ENCODE measurements at regions of chr4 and their contacts with region 1.

Region 1: GRCh38 chr4:119212234-119212963 is at the start of gene USP53:
- DNase-seq: peak; percentile 99
- ATAC-seq: peak; percentile 92
- H3K4me3 Mint-ChIP-seq: peak within 1 kb of the TSS; percentile 86
- H3K27ac Mint-ChIP-seq: peak within 1 kb of the TSS; percentile 91
- H3K4me1 Mint-ChIP-seq: peaks cover 39% of the 10 kb centered on the region
- H3K27me3 Mint-ChIP-seq: no peaks in the 10 kb centered on the region
- total RNA-seq, gene USP53: 11.4 to 14.0 TPM

Region 2: GRCh38 chr4:118278473-118279274 is 933.7 kb before region 1 on chr4:
- CTCF ChIA-PET with region 1: no interaction called
- POLR2A ChIA-PET with region 1: no interaction called
- intact Hi-C with region 1: loop called in 1 of 2 experiments (anchors 2 kb)
- DNase-seq: peak; percentile 99
- ATAC-seq: peak; percentile 96
- H3K4me3 Mint-ChIP-seq: peak overlapping the region; percentile 96
- H3K27ac Mint-ChIP-seq: peak overlapping the region; percentile 99
- H3K4me1 Mint-ChIP-seq: peaks cover 37% of the 10 kb centered on the region
- H3K27me3 Mint-ChIP-seq: no peaks in the 10 kb centered on the region

Region 3: GRCh38 chr4:118835571-118836300 is 376.7 kb before region 1 on chr4 and contains the start of gene SEC24D:
- CTCF ChIA-PET with region 1: no interaction called
- POLR2A ChIA-PET with region 1: no interaction called
- intact Hi-C with region 1: loop called in 1 of 2 experiments (anchors 5 kb)
- DNase-seq: peak; percentile 91
- ATAC-seq: peak; percentile 88
- H3K4me3 Mint-ChIP-seq: peak within 1 kb of the TSS; percentile 86
- H3K27ac Mint-ChIP-seq: peak within 1 kb of the TSS; percentile 98
- H3K4me1 Mint-ChIP-seq: peaks cover 20% of the 10 kb centered on the region
- H3K27me3 Mint-ChIP-seq: no peaks in the 10 kb centered on the region
- total RNA-seq, gene SEC24D: 28.5 to 33.0 TPM

Region 4: GRCh38 chr4:119113033-119113655 is 99.3 kb before region 1 on chr4:
- CTCF ChIA-PET with region 1: no interaction called
- POLR2A ChIA-PET with region 1: no interaction called
- intact Hi-C with region 1: loop called in 1 of 2 experiments (anchors 5 kb)
- DNase-seq: no peak
- ATAC-seq: peak; percentile 57
- H3K4me3 Mint-ChIP-seq: no peak overlapping the region
- H3K27ac Mint-ChIP-seq: no peak overlapping the region
- H3K4me1 Mint-ChIP-seq: peaks cover 4% of the 10 kb centered on the region
- H3K27me3 Mint-ChIP-seq: peaks cover 5% of the 10 kb centered on the region

Region 5: DNA sequence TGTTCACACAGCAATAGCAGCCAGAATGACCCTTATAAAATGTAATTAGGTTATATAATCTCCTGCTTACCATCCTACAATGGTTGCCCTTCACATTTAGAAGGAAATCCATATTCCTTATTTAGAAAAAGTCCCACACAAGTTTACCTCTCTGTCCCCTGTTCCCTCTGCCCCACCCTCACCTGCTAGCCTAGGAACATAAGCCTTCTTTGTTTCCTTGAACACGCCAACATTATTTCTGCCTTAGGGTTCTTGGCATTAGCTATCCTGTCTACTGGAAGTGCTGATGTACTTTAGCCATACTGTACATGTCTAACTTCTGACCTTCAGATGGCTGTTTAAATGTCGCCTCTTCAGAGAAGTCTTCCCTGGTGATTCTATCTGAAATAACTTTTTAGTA is 28.3 kb before region 1 on chr4:
- CTCF ChIA-PET with region 1: no interaction called
- POLR2A ChIA-PET with region 1: no interaction called
- intact Hi-C with region 1: no loop called
- DNase-seq: no peak
- ATAC-seq: no peak
- H3K4me3 Mint-ChIP-seq: no peak overlapping the region
- H3K27ac Mint-ChIP-seq: no peak overlapping the region
- H3K4me1 Mint-ChIP-seq: no peaks in the 10 kb centered on the region
- H3K27me3 Mint-ChIP-seq: peaks cover 3% of the 10 kb centered on the region

Region 6: GRCh38 chr4:119268451-119268850 is 56.1 kb after region 1 on chr4:
- CTCF ChIA-PET with region 1: no interaction called
- POLR2A ChIA-PET with region 1: interaction called, 3 read pairs
- intact Hi-C with region 1: loop called (anchors 1 to 5 kb)
- DNase-seq: no peak
- ATAC-seq: no peak
- H3K4me3 Mint-ChIP-seq: no peak overlapping the region
- H3K27ac Mint-ChIP-seq: no peak overlapping the region
- H3K4me1 Mint-ChIP-seq: peaks cover 13% of the 10 kb centered on the region
- H3K27me3 Mint-ChIP-seq: no peaks in the 10 kb centered on the region

Region 7: DNA sequence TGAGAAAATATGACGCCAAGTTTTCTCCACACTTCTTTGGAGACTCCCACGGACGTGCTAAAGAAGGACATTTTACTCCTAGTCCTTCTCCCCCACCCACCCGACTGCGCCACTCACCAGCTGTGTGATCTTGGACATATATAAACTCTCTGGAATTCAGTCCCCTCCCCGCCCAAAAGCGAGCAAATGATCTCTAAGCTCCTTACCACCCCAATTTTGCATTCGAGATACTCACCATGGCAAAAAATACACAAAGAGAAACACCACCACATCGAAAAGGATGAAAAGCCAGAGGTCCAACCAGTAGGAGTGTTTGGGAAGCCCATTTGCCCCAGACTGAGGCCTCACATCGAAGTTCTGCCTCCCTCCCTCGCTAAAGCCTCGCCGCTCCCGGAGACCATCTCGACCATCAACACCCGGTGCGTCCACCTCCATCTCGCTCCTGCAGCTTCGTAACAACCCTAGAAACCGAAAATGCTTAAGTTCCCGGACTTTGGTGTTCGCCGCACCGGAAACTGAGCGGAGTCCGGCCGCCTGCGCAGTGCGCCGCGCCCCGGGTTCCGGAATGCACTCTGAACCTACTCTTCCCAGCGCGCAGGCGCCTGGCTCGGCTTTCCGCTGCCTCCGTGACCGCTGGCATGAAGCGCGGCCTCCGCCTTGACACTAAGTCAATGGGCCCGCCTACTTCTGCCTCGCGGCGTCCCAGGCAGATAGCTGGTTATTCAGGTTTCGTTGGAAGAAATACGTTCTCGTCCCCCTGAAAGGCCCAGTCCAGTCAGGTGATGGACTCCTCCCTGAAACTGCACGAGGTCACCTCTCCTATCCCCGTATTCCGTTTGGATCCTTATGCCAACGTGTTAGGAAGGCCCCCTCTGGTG is 87.9 kb after region 1 on chr4:
- CTCF ChIA-PET with region 1: interaction called, 6 read pairs
- POLR2A ChIA-PET with region 1: interaction called, 9 read pairs
- intact Hi-C with region 1: loop called (anchors 1 kb)
- DNase-seq: peak; percentile 97
- ATAC-seq: peak; percentile 98
- H3K4me3 Mint-ChIP-seq: peak overlapping the region; percentile 100
- H3K27ac Mint-ChIP-seq: peak overlapping the region; percentile 96
- H3K4me1 Mint-ChIP-seq: peaks cover 25% of the 10 kb centered on the region
- H3K27me3 Mint-ChIP-seq: no peaks in the 10 kb centered on the region

Measured in activated CD4-positive, alpha-beta T cell treated with anti-CD3 and anti-CD28 coated beads for 36 hours (primary cell).